HCT116 (cell line): ENCODE measurements at regions of chrX and their contacts with region 1.

Region 1: GRCh38 chrX:124388562-124388961 is 42.2 kb downstream of the SH2D1A start:
- DNase-seq: peak; percentile 10
- ATAC-seq: peak; percentile 70
- H3K4me3 ChIP-seq: no peak overlapping the region
- H3K27ac ChIP-seq: no peak overlapping the region
- H3K4me1 ChIP-seq: no peaks in the 10 kb centered on the region
- H3K27me3 ChIP-seq: no peaks in the 10 kb centered on the region; the same call in 1 of the 2 replicates
- CTCF ChIP-seq: peak; percentile 16 to 54 (median 47); a peak in 5 of 6 replicates
- POLR2A ChIP-seq: no peak
- RAD21 ChIP-seq: peak; percentile 49

Region 2: DNA sequence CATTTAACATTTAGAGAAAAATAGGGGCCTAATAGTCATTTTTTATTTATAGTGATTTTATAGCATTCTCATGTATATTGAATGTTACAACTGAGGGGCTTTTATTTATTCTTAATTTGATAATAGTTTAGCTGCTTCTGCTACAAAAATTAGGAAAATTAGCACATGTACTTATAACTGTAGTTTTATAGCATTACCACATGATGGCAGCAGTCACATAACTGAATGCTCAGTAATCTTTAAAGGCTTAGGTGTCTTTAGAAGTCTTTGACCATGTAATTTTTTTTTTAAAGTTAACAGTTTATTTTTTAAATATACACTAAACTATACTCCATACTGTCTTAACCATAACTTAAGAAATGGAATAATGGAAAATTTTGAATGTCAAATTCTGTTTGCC is 290.5 kb before region 1 on chrX:
- CTCF ChIA-PET with region 1: no interaction called
- POLR2A ChIA-PET with region 1: no interaction called
- RAD21 ChIA-PET with region 1: no interaction called
- intact Hi-C with region 1: loop called (anchors 10 kb)
- DNase-seq: no peak
- ATAC-seq: peak; percentile 49; the same call in 1 of the 2 replicates
- H3K4me3 ChIP-seq: no peak overlapping the region
- H3K27ac ChIP-seq: no peak overlapping the region
- H3K4me1 ChIP-seq: no peaks in the 10 kb centered on the region
- H3K27me3 ChIP-seq: no peaks in the 10 kb centered on the region
- CTCF ChIP-seq: peak; percentile 7 to 42 (median 22); a peak in 3 of 6 replicates
- POLR2A ChIP-seq: no peak
- RAD21 ChIP-seq: peak; percentile 24; the same call in 1 of the 2 replicates

Region 3: DNA sequence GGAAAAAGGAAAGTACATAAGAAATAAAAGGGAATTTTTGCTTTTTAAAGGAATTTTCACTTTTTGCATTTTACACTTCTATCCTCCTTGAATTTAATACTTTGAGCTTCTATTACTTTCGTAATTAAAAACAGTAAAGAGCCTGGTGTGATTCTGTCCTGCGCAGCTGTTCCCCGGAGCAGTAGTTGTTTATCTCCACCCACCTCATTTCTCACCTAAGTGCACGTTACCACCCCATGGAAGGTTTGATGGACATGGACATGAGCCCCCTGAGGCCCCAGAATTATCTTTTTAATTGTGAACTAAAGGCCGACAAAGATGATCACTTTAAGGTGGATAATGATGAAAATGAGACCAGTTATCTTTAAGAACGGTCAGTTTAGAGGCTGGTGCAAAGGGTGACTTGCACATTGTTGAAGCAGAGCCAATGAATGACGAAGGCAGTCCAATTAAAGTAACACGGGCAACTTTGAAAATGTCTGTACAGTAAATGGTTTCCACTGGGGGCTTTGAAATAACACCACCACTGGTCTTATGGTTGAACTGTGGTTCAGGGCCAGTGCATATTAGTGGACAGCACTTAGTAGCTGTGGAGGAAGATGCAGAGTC is 108.2 kb before region 1 on chrX:
- CTCF ChIA-PET with region 1: no interaction called
- POLR2A ChIA-PET with region 1: no interaction called
- RAD21 ChIA-PET with region 1: no interaction called
- intact Hi-C with region 1: no loop called
- DNase-seq: no peak
- ATAC-seq: no peak
- H3K4me3 ChIP-seq: no peak overlapping the region
- H3K27ac ChIP-seq: no peak overlapping the region
- H3K4me1 ChIP-seq: no peaks in the 10 kb centered on the region
- H3K27me3 ChIP-seq: no peaks in the 10 kb centered on the region
- CTCF ChIP-seq: no peak
- POLR2A ChIP-seq: no peak
- RAD21 ChIP-seq: no peak